PC-3 (cell line): ENCODE measurements at regions of chr5 and their contacts with region 1.

Region 1: DNA sequence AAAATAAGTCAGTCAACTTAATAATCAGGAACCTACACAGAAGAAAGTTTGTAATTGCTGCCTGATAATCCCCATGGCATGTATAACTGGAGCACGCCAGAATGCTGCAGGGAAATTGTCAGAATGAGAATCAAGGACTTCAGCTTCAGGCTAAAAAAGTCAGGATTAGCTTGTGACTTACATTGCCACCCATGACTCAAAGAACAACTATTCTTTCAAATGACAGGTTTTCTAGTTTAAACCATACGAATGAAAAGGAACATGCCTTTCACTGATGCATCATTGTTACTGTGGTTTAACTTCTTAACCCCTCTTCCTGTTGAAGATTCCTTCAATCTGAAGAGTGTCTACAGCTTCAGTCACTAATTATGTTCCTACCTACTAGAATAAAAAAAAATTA is 112.4 kb downstream of the ISL1 start:
- DNase-seq: peak; percentile 76
- ATAC-seq: peak; percentile 84
- H3K4me3 ChIP-seq: no peak overlapping the region
- H3K27ac ChIP-seq: peak overlapping the region; percentile 11; the same call in 1 of the 2 replicates
- H3K4me1 ChIP-seq: peaks cover 12% of the 10 kb centered on the region
- H3K27me3 ChIP-seq: no peaks in the 10 kb centered on the region
- CTCF ChIP-seq: no peak

Region 2: GRCh38 chr5:50580506-50580905 is 915.2 kb before region 1 on chr5:
- CTCF ChIA-PET with region 1: no interaction called
- POLR2A ChIA-PET with region 1: no interaction called
- intact Hi-C with region 1: no loop called
- DNase-seq: peak; percentile 14
- ATAC-seq: no peak
- H3K4me3 ChIP-seq: no peak overlapping the region
- H3K27ac ChIP-seq: no peak overlapping the region
- H3K4me1 ChIP-seq: no peaks in the 10 kb centered on the region
- H3K27me3 ChIP-seq: no peaks in the 10 kb centered on the region
- CTCF ChIP-seq: no peak

Region 3: DNA sequence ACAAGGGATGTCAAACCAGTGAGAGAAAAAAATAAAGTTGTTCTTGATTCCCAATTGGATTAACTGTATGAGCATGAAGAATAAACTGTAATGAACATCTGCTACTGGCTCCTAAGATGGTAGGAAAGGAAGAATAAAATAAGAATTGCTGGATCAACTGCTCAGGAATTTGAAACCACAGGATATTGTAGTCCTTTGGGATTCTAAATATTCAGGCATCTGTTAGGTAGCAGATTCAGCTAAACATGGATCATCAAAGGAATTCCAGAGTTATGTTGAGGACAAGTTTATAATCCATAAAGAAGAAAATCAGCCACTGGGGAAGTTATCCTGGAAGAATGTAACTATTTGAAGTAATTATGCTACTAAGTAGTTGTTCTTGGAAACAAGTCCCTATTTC is 46.6 kb before region 1 on chr5:
- CTCF ChIA-PET with region 1: no interaction called
- POLR2A ChIA-PET with region 1: no interaction called
- intact Hi-C with region 1: no loop called
- DNase-seq: no peak
- ATAC-seq: no peak
- H3K4me3 ChIP-seq: no peak overlapping the region
- H3K27ac ChIP-seq: no peak overlapping the region
- H3K4me1 ChIP-seq: no peaks in the 10 kb centered on the region
- H3K27me3 ChIP-seq: no peaks in the 10 kb centered on the region
- CTCF ChIP-seq: no peak

Region 4: GRCh38 chr5:51544031-51544785 is 48.5 kb after region 1 on chr5:
- CTCF ChIA-PET with region 1: no interaction called
- POLR2A ChIA-PET with region 1: no interaction called
- intact Hi-C with region 1: no loop called
- DNase-seq: no peak
- ATAC-seq: no peak
- H3K4me3 ChIP-seq: no peak overlapping the region
- H3K27ac ChIP-seq: no peak overlapping the region
- H3K4me1 ChIP-seq: no peaks in the 10 kb centered on the region
- H3K27me3 ChIP-seq: no peaks in the 10 kb centered on the region
- CTCF ChIP-seq: no peak

Region 5: DNA sequence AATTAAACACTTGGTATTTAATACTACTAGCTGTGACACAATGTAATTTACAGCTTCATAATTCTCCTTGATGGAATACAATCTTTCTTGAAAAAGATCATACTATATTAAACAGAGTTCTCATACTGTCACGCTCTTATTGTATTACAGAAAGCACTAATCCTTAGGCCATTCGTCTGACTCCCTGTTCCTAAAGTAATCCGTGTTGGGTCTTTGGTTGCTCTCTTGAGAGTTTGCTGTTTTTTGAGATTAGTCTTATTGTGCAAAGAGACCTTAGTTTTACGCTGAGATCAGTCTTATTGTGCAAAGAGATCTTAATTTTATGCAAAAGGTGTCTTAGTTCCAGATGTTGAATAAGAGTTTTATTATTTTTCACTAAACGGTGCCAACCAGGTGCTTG is 78.2 kb after region 1 on chr5:
- CTCF ChIA-PET with region 1: no interaction called
- POLR2A ChIA-PET with region 1: no interaction called
- intact Hi-C with region 1: loop called (anchors 5 kb)
- DNase-seq: no peak
- ATAC-seq: no peak
- H3K4me3 ChIP-seq: no peak overlapping the region
- H3K27ac ChIP-seq: no peak overlapping the region
- H3K4me1 ChIP-seq: no peaks in the 10 kb centered on the region
- H3K27me3 ChIP-seq: no peaks in the 10 kb centered on the region
- CTCF ChIP-seq: no peak

Region 6: DNA sequence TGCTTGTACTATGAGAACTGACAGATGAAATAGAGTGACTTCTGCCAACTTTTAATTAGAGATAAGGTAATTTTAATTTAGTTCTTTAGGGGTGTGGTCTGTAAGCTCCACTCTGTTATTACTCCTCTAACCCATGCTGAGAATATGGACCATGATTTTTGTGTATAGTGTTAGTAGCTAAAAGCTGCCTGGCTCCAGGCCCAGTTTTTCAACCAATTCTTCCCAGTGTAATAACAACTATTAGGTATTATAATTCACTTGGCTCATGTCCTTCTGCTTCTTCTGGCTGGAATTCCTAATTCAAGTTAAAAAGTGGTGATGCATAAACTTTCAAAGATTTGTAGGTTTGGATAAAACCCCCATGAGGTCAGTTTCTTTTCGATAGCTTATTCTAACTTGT is 103.9 kb after region 1 on chr5:
- CTCF ChIA-PET with region 1: no interaction called
- POLR2A ChIA-PET with region 1: no interaction called
- intact Hi-C with region 1: no loop called
- DNase-seq: no peak
- ATAC-seq: no peak
- H3K4me3 ChIP-seq: no peak overlapping the region
- H3K27ac ChIP-seq: no peak overlapping the region
- H3K4me1 ChIP-seq: no peaks in the 10 kb centered on the region
- H3K27me3 ChIP-seq: no peaks in the 10 kb centered on the region
- CTCF ChIP-seq: no peak

Region 7: DNA sequence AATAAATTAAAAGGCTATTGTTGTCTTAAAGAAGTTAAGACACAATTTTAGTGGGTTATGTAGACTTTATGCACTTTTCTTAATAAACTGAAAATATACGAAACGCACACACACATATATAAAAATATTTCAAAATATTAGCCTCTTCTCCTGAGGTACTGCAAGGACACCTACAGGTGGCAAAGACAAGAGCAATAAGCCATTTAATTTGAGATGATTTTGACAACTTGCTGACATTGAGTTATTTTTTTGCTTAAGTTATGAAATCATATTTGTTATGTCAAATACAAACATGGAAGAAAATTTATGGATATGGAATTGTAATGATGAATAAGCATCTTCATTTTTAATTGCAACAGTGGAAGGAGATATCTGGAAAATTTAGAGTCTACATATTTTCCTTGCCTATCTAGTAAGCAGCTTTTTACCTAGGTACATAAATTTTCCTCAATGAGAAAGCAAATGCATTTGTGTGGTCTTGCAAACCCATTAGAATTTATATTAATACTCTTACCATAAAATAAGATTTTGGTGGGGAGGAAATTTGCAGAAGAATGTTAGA is 189.2 kb after region 1 on chr5:
- CTCF ChIA-PET with region 1: interaction called, 4 read pairs
- POLR2A ChIA-PET with region 1: no interaction called
- intact Hi-C with region 1: loop called (anchors 2 kb)
- DNase-seq: peak; percentile 9
- ATAC-seq: no peak
- H3K4me3 ChIP-seq: no peak overlapping the region
- H3K27ac ChIP-seq: no peak overlapping the region
- H3K4me1 ChIP-seq: no peaks in the 10 kb centered on the region; the same call in 1 of the 2 replicates
- H3K27me3 ChIP-seq: no peaks in the 10 kb centered on the region
- CTCF ChIP-seq: peak; percentile 57

Region 8: DNA sequence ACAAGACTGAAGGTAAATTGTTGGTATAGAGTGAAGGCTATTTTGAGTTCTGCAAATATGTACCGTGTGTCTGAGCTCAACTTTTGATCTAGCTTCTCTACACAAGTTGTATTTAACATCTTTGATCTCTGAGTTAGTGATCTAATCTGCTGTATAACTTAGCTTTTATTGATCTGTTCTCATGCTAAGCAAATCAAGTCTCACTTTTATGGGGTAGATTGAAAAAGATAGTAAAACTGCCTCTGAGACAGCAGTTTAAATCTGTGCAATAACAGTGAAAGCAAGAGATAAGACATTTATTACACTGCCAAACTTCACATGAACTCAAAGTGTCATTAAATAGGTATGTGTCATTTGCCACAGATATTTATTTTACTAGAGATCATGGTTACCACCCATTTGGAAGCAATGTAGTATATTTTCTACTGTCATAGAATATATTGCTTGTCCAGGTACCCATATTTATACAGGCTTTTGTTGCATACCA is 364.9 kb after region 1 on chr5:
- CTCF ChIA-PET with region 1: no interaction called
- POLR2A ChIA-PET with region 1: no interaction called
- intact Hi-C with region 1: loop called (anchors 10 kb)
- DNase-seq: peak; percentile 82
- ATAC-seq: peak; percentile 96
- H3K4me3 ChIP-seq: no peak overlapping the region
- H3K27ac ChIP-seq: peak overlapping the region; percentile 68
- H3K4me1 ChIP-seq: peaks cover 16% of the 10 kb centered on the region
- H3K27me3 ChIP-seq: no peaks in the 10 kb centered on the region
- CTCF ChIP-seq: no peak

Region 9: GRCh38 chr5:51960617-51961115 is 465.0 kb after region 1 on chr5:
- CTCF ChIA-PET with region 1: interaction called, 3 read pairs
- POLR2A ChIA-PET with region 1: no interaction called
- intact Hi-C with region 1: loop called (anchors 1 kb)
- DNase-seq: peak; percentile 60
- ATAC-seq: peak; percentile 87
- H3K4me3 ChIP-seq: no peak overlapping the region
- H3K27ac ChIP-seq: no peak overlapping the region
- H3K4me1 ChIP-seq: peaks cover 7% of the 10 kb centered on the region
- H3K27me3 ChIP-seq: no peaks in the 10 kb centered on the region
- CTCF ChIP-seq: peak; percentile 78

Region 10: GRCh38 chr5:52007230-52007858 is 511.7 kb after region 1 on chr5:
- CTCF ChIA-PET with region 1: no interaction called
- POLR2A ChIA-PET with region 1: no interaction called
- intact Hi-C with region 1: loop called (anchors 1 kb)
- DNase-seq: peak; percentile 51
- ATAC-seq: peak; percentile 76
- H3K4me3 ChIP-seq: no peak overlapping the region
- H3K27ac ChIP-seq: no peak overlapping the region
- H3K4me1 ChIP-seq: no peaks in the 10 kb centered on the region
- H3K27me3 ChIP-seq: no peaks in the 10 kb centered on the region
- CTCF ChIP-seq: peak; percentile 81